ENCODE measurements at regions of chr19 and their contacts with region 1.

Region 1: DNA sequence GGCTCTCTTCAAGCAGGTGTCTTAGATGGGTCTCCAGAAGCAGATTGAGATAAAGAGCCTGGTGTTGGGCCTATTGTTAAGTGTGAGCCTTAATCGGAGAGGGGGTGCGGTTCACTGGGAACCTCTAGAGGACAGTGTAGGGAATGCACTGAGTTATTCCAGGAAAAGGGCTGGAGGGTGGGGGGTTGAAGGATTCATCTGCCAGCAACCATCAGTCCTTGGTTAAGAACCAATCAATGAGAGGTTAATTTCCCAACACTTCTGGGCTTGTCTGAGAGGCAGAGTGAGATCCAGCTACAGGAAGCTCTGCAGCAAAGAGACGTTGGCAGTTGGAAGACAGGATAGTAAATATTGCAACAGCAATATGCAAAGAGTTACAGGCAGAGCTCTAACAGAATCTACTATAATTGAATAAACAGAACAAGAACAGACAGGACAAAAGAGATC is 28.7 kb downstream of the CYP4F2 start:
- DNase-seq: peak in 1 of 2 donors; percentile 15
- ATAC-seq: peak in 4 of 8 donors; percentile 53 to 74 (median 61)
- H3K4me3 ChIP-seq: no peak overlapping the region
- H3K27ac ChIP-seq: no peak overlapping the region
- H3K4me1 ChIP-seq: peaks cover 0 to 3% (median 0%) of the 10 kb centered on the region in 9 donors
- H3K27me3 ChIP-seq: peaks cover 0 to 44% (median 25%) of the 10 kb centered on the region in 7 donors
- CTCF ChIP-seq: peak; percentile 33 to 65 (median 55)

Region 2: GRCh38 chr19:15584541-15585115 is 284.5 kb before region 1 on chr19:
- intact Hi-C with region 1: loop called in 1 of 10 experiments (anchors 5 kb)
- DNase-seq: peak; percentile 70 to 83
- ATAC-seq: peak; percentile 66 to 90 (median 76)
- H3K4me3 ChIP-seq: no peak overlapping the region
- H3K27ac ChIP-seq: no peak overlapping the region
- H3K4me1 ChIP-seq: peaks cover 0 to 14% (median 0%) of the 10 kb centered on the region in 9 donors
- H3K27me3 ChIP-seq: peaks cover 0 to 64% (median 46%) of the 10 kb centered on the region in 7 donors
- CTCF ChIP-seq: peak; percentile 59 to 92 (median 84)